Activated T-helper 1 cell treated with anti-CD3 and anti-CD28 coated beads, Interleukin-12 subunit alpha, Interleukin-12 subunit beta, Interleukin-2, Interleukin-4 antibody, amounts not matched to agents 30 ng/mL and 10 ng/mL and 1 ng/mL, durations not matched to agents 14 hours and 24 hours and 36 hours (primary cell): ENCODE measurements at regions of chr16 and their contacts with region 1.

Region 1: DNA sequence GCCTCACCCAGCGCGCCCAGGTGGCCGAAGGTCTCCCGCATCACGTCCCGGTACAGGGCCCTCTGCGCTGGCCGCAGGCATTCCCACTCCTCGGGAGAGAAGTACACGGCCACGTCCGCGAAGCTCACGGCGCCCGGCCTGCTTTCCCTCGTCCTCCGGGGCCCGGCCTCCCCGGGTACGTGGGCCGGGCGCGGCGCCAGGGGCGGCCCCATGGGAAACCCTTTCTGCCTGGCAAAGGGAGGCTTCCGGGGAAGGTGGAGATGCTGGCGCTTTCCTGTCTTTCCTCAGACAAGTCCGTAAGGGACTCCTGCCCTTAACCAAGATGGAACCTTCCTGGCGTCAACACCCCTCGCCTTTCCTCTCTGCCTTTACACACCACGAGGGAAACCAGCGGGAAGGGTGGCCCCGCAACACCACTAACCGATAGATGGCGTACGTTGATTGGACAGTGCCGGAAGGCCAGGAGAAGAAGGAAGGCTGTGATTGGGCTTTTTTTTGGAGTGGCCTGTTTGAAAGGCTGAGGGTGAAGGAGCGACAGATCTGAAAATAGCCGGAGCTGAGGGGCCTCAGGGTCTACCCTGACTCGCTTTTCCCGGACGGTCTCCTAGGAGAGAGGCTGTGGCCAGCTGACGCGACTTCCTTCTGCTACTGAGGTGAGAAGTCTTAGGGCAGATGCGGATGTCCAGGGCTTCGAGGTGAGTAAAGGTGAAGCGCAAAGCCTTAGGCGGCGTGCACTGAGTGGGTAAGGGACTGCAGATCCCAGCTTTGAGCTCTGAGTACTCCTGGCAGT is at the start of gene ZNF785:
- DNase-seq: peak; percentile 93
- H3K4me3 Mint-ChIP-seq: peak within 1 kb of the TSS; percentile 89
- H3K27ac Mint-ChIP-seq: peak within 1 kb of the TSS; percentile 87
- H3K4me1 Mint-ChIP-seq: peaks cover 18% of the 10 kb centered on the region
- H3K27me3 Mint-ChIP-seq: no peaks in the 10 kb centered on the region
- total RNA-seq, gene ZNF785: 19.2 and 21.5 TPM in 2 replicates

Region 2: DNA sequence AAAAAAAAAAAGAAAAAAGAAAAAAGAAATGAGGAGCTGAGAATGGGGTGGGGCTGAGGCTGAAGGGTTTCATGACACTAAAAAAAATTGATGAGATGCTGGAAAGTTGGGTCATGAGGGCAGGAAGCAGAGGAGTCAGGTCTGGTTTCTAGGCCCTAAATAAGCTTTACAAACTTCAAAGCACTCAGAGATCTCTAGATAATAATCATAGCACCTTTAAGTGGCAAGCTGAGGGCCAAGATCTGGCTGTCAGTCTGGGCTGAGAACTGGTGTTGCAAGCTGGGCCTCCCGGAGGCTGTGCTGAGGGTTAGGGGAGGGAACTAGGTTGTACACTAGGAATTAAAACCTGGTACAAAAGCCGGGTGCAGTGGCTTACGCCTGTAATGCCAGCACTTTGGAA is 33.8 kb before region 1 on chr16:
- intact Hi-C with region 1: loop called (anchors 5 kb)
- DNase-seq: peak; percentile 66
- H3K4me3 Mint-ChIP-seq: peak overlapping the region; percentile 59
- H3K27ac Mint-ChIP-seq: peak overlapping the region; percentile 93
- H3K4me1 Mint-ChIP-seq: peaks cover 56% of the 10 kb centered on the region
- H3K27me3 Mint-ChIP-seq: no peaks in the 10 kb centered on the region

Region 3: DNA sequence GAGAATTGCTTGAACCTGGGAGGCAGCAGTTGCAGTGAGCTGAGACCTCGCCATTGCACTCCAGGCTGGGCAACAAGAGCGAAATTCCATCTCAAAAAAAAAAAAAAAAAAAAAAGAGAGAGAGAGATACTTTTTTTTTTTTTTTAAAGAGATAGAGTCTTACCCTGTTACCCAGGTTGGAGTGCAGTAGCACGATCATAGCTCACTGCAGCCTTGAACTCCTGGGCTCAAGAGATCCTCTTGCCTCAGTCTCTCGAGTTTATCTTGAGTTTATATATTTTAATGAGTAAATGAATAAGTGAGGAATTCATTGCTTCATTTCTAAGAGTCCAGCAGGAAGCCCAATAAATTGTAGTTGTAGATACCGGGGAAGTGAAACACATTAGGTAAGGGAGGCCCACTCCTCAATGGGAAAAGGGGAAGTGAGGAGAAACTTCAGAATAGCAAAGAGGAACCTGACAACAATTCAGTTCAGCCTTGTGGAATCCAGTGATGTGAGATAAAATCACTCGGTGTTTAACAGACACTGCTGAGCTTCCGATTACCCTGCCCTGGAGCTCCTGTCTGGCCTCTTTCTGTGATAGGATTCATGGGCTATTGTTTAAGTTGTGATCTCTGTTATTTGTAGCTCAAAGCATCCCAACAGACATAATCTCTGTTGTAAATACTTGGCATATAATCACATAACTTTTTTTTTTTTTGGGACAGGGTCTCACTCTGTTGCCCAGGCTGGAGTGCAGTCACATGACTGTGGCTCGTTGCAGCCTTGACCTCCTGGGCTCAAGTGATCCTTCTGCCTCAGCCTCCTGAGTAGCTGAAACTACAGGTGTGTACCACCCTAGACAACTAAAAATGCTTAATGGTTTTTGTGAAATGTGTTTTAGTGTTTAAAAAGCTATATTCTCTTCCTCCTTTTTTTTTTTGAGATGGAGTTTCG is 658.4 kb after region 1 on chr16:
- intact Hi-C with region 1: no loop called
- DNase-seq: no peak
- H3K4me3 Mint-ChIP-seq: no peak overlapping the region
- H3K27ac Mint-ChIP-seq: no peak overlapping the region
- H3K4me1 Mint-ChIP-seq: no peaks in the 10 kb centered on the region
- H3K27me3 Mint-ChIP-seq: no peaks in the 10 kb centered on the region